ENCODE measurements at regions of chr5 and their contacts with region 1.

Region 1: DNA sequence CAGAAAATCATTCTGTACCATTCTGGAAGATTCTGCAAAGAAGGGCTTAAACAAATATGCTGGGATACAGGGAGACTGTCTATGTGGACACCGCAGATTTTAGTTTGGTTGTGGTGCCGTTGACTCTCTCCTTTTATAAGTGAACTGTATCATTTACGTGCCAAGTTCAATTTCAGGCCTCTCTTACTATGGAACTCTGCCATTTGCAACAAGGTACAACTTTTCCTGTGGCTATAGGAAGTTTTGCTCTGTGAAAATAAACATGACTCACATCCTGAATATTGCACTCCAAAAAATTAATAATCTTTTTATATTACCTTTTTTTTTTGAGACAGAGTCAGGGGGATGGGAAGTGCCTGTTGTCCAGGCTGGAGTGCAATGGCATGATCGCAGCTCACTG is 29.7 kb upstream of the CSNK1G3 start:
- DNase-seq: no peak
- H3K4me3 ChIP-seq: no peak overlapping the region
- H3K27ac ChIP-seq: peak overlapping the region in 1 of 2 donors; percentile 24
- H3K4me1 ChIP-seq: peaks cover 0 to 14% of the 10 kb centered on the region in 2 donors
- H3K27me3 ChIP-seq: no peaks in the 10 kb centered on the region
- CTCF ChIP-seq: no peak

Region 2: GRCh38 chr5:123423278-123424149 is 58.7 kb before region 1 on chr5 and contains the start of gene CEP120:
- intact Hi-C with region 1: loop called (anchors 5 kb)
- DNase-seq: peak; percentile 93 to 99
- H3K4me3 ChIP-seq: peak within 1 kb of the TSS; percentile 73 to 86
- H3K27ac ChIP-seq: peak within 1 kb of the TSS; percentile 83 to 87
- H3K4me1 ChIP-seq: peaks cover 0 to 8% of the 10 kb centered on the region in 2 donors
- H3K27me3 ChIP-seq: no peaks in the 10 kb centered on the region
- CTCF ChIP-seq: peak; percentile 68 to 87 (median 81)
- total RNA-seq, gene CEP120: 11.6 TPM